AG04450 (cell line): ENCODE measurements at regions of chr11 and their contacts with region 1.

Region 1: DNA sequence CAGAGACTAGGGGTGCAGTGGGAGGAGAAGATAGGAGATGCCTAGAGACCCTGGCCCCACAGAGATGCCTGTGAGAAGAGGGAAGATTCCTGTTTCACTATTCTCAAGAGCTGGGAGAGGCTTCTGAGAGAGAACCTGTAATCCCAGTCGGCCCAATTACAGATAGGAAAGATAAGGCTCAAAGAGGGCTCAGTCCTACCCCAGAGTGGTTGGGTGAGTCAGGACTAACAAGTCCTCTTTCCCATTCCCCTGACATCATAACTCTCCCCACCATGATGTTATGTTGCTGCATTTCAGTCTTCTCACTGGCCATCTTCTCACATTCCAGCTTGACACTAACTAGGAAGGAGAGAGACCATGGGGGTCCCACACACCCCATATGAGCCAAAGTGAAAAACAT is 17.9 kb downstream of the ARHGEF12 start:
- DNase-seq: no peak
- H3K4me3 ChIP-seq: no peak overlapping the region
- H3K27ac ChIP-seq: no peak overlapping the region
- H3K27me3 ChIP-seq: no peaks in the 10 kb centered on the region
- CTCF ChIP-seq: no peak

Region 2: DNA sequence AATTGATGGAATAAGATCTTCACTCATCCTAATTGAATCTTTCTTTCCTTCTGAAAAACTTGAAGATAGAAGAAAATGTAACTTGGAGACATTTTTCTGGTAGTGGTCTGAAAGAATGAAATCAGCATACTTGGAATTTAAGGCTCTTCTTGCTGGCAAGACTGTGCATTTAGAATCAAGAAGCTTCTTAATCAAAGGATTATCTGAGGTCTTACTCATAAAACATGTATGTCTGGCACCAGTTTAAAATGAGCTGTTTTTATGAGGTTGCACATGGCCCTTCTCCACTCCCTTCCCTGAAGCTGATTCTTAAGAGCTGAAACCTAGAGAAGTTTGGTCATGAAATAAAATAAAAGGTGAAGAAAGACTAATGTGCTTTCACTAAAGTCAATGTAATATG is 59.4 kb after region 1 on chr11:
- CTCF ChIA-PET with region 1: interaction called, 10 read pairs
- POLR2A ChIA-PET with region 1: no interaction called
- DNase-seq: peak; percentile 45
- H3K4me3 ChIP-seq: no peak overlapping the region
- H3K27ac ChIP-seq: no peak overlapping the region
- H3K27me3 ChIP-seq: no peaks in the 10 kb centered on the region
- CTCF ChIP-seq: no peak